Adrenal gland (tissue), 19 donors: ENCODE measurements at regions of chr9 and their contacts with region 1.

Region 1: GRCh38 chr9:32384364-32385151 is at the start of gene ACO1:
- DNase-seq: peak; percentile 87 to 93 (median 91)
- H3K4me3 ChIP-seq: peak within 1 kb of the TSS; percentile 5 to 88 (median 76)
- H3K27ac ChIP-seq: peak within 1 kb of the TSS; percentile 89 to 96 (median 92)
- H3K4me1 ChIP-seq: peaks cover 17 to 27% of the 10 kb centered on the region in 2 donors
- H3K27me3 ChIP-seq: no peaks in the 10 kb centered on the region
- CTCF ChIP-seq: no peak
- POLR2A ChIP-seq: peak; percentile 79 to 96
- total RNA-seq, gene ACO1: 71.3 to 130 (median 103) TPM

Region 2: GRCh38 chr9:32426278-32426939 is 41.9 kb after region 1 on chr9:
- intact Hi-C with region 1: loop called (anchors 5 kb)
- DNase-seq: peak in 5 of 7 donors; percentile 16 to 71 (median 30)
- H3K4me3 ChIP-seq: no peak overlapping the region
- H3K27ac ChIP-seq: peak overlapping the region in 2 of 5 donors; percentile 45 to 65
- H3K4me1 ChIP-seq: peaks cover 0 to 8% of the 10 kb centered on the region in 2 donors
- H3K27me3 ChIP-seq: no peaks in the 10 kb centered on the region
- CTCF ChIP-seq: no peak
- POLR2A ChIP-seq: no peak

Region 3: DNA sequence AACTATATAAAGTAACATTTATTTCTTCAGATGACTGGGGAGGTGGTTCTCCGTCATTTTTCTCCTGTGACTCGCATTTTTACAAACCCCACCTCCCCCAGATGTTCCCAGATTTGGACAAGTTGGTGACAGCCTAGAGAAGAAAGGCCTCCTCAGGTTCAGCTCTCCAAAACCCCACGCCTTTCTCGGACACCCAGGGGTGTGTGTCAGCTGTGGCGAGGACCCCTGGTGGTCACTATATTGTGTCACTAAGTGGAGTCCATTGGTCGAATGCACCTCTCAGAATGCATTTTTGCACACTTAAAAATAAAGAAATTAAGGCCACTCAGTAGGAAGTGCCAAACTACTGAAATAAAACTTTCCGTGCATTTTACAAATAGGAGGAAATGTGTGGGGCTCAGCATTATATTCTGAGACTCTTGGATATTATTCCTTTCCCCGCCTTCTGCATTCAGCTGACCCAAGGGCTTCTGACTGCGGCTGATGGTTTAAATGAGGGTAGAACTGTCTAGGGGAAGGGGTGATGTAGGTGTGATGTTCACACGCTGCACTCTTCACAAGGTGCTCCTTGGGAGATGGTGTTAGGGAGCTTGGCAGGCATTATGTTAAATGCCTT is 47.5 kb after region 1 on chr9:
- intact Hi-C with region 1: loop called (anchors 5 kb)
- DNase-seq: peak; percentile 43 to 72 (median 57)
- H3K4me3 ChIP-seq: no peak overlapping the region
- H3K27ac ChIP-seq: peak overlapping the region in 1 of 5 donors; percentile 4
- H3K4me1 ChIP-seq: peaks cover 0 to 8% of the 10 kb centered on the region in 2 donors
- H3K27me3 ChIP-seq: no peaks in the 10 kb centered on the region
- CTCF ChIP-seq: peak; percentile 35 to 62 (median 56)
- POLR2A ChIP-seq: no peak

Region 4: DNA sequence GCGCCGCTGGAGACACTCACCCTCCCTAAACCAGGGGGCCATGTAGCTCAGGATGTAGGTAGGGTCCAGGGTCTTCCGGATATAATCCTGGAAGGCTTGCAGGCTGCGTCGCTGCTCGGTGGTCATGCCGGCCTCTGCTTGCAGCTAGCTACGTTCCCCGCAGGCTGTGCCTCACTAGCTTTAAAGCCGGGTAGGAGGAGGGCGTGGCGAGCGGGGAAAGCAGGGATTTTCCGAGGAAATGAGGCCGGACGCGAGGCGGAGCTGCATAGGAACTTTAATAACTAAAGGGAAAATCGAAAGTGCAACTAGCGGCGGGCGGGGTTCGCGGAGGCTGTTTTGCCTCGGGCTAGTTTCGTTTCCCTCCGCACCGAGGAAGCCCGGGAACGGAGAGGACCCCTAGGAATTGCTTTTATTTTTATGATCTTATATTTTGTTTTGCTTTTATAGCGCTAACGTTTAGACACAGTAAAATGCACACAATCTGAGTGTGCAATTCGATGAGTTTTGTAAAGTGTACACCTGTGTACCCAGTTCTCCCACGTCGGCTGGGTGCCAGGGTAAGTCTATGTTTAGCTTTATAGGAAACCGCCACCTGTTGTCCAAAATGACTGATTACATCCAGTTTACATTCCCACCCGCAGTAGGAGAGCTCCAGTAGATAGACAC is 141.6 kb after region 1 on chr9 and contains the start of gene RIGI:
- intact Hi-C with region 1: no loop called
- DNase-seq: peak; percentile 92 to 98 (median 96)
- H3K4me3 ChIP-seq: peak within 1 kb of the TSS; percentile 5 to 90 (median 70)
- H3K27ac ChIP-seq: peak within 1 kb of the TSS; percentile 40 to 90 (median 86)
- H3K4me1 ChIP-seq: peaks cover 5 to 20% of the 10 kb centered on the region in 2 donors
- H3K27me3 ChIP-seq: no peaks in the 10 kb centered on the region
- CTCF ChIP-seq: peak in 4 of 6 experiments; percentile 22 to 59 (median 46)
- POLR2A ChIP-seq: peak; percentile 40 to 89
- total RNA-seq, gene RIGI: 6.3 to 13.2 (median 8.1) TPM

Region 5: GRCh38 chr9:32986971-32987370 is 602.4 kb after region 1 on chr9:
- intact Hi-C with region 1: loop called in 1 of 2 experiments (anchors 10 kb)
- DNase-seq: no peak
- H3K4me3 ChIP-seq: no peak overlapping the region
- H3K27ac ChIP-seq: no peak overlapping the region
- H3K4me1 ChIP-seq: peaks cover under 1% of the 10 kb centered on the region in 2 donors
- H3K27me3 ChIP-seq: no peaks in the 10 kb centered on the region
- CTCF ChIP-seq: no peak
- POLR2A ChIP-seq: no peak